HCT116 (cell line): ENCODE measurements at regions of chr17 and their contacts with region 1.

Region 1: GRCh38 chr17:75393523-75394331 is 11.8 kb downstream of the GRB2 start:
- DNase-seq: peak; percentile 95
- ATAC-seq: peak; percentile 99
- H3K4me3 ChIP-seq: peak overlapping the region; percentile 50 to 75
- H3K27ac ChIP-seq: peak overlapping the region; percentile 60
- H3K4me1 ChIP-seq: peaks cover 23 to 30% of the 10 kb centered on the region in 2 experiments
- H3K27me3 ChIP-seq: no peaks in the 10 kb centered on the region
- CTCF ChIP-seq: no peak; a peak in 1 of 6 replicates
- POLR2A ChIP-seq: peak; percentile 52
- RAD21 ChIP-seq: no peak

Region 2: GRCh38 chr17:74646231-74646630 is 747.5 kb before region 1 on chr17:
- CTCF ChIA-PET with region 1: no interaction called
- POLR2A ChIA-PET with region 1: no interaction called
- RAD21 ChIA-PET with region 1: no interaction called
- intact Hi-C with region 1: no loop called
- DNase-seq: peak; percentile 54
- ATAC-seq: peak; percentile 86
- H3K4me3 ChIP-seq: no peak overlapping the region
- H3K27ac ChIP-seq: no peak overlapping the region
- H3K4me1 ChIP-seq: no peaks in the 10 kb centered on the region
- H3K27me3 ChIP-seq: peaks cover 79% of the 10 kb centered on the region
- CTCF ChIP-seq: peak; percentile 65 to 75 (median 66); a peak in 5 of 6 replicates
- POLR2A ChIP-seq: no peak
- RAD21 ChIP-seq: peak; percentile 71

Region 3: GRCh38 chr17:75380315-75380714 is 13.4 kb before region 1 on chr17:
- CTCF ChIA-PET with region 1: interaction called, 3 read pairs
- POLR2A ChIA-PET with region 1: interaction called, 27 read pairs
- RAD21 ChIA-PET with region 1: no interaction called
- intact Hi-C with region 1: no loop called
- DNase-seq: no peak
- ATAC-seq: no peak
- H3K4me3 ChIP-seq: no peak overlapping the region
- H3K27ac ChIP-seq: no peak overlapping the region
- H3K4me1 ChIP-seq: peaks cover 2 to 3% of the 10 kb centered on the region in 2 experiments; a peak in 2 of 4 replicates
- H3K27me3 ChIP-seq: no peaks in the 10 kb centered on the region
- CTCF ChIP-seq: no peak
- POLR2A ChIP-seq: no peak
- RAD21 ChIP-seq: no peak

Region 4: GRCh38 chr17:75405365-75406221 is 11.9 kb after region 1 on chr17 and contains the start of gene GRB2:
- CTCF ChIA-PET with region 1: interaction called, 10 read pairs
- POLR2A ChIA-PET with region 1: interaction called, 19 read pairs
- RAD21 ChIA-PET with region 1: interaction called in 1 of 2 experiments, 3 read pairs
- intact Hi-C with region 1: no loop called
- DNase-seq: peak; percentile 94
- ATAC-seq: peak; percentile 92
- H3K4me3 ChIP-seq: peak within 1 kb of the TSS; percentile 97
- H3K27ac ChIP-seq: peak within 1 kb of the TSS; percentile 87
- H3K4me1 ChIP-seq: peaks cover 5 to 19% of the 10 kb centered on the region in 2 experiments
- H3K27me3 ChIP-seq: no peaks in the 10 kb centered on the region
- CTCF ChIP-seq: no peak
- POLR2A ChIP-seq: peak; percentile 68
- RAD21 ChIP-seq: no peak
- total RNA-seq, gene GRB2: 146 TPM

Region 5: DNA sequence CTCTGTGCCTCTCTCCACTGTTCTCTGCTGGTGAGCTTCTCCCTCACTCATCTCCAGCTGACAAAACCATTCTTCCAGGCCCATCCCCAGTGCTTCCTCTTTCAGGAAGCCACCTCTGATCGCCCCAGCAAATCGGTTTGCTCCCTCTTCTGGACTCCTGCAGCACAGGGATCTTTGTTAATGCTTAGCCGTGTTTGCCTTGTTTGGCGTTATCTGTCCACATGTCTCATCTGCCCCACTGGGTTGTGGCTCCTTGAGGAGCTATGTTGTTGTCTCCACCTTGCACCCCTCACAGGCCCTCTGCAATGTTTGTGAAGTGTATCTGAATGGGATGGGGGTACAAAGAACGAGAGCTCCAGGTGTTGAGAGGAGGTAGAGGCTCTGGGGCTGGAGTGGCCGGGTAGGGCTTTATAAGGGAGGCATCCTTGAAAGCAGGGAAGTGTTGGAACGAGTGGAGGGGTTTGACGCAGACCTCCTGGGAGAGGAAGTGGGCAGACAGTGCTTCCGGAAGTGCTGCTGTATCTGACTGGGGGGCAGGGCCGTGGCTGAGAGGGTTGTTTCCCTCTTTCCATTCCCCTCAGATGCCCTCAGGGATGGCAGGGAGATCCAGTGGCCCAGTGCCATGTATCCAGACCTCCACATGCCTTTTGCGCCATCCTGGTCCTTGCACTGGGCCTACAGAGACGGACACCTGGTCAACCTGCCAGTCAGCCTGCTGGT is 93.8 kb after region 1 on chr17:
- CTCF ChIA-PET with region 1: no interaction called
- POLR2A ChIA-PET with region 1: no interaction called
- RAD21 ChIA-PET with region 1: no interaction called
- intact Hi-C with region 1: no loop called
- DNase-seq: no peak
- ATAC-seq: peak; percentile 16; the same call in 1 of the 2 replicates
- H3K4me3 ChIP-seq: no peak overlapping the region
- H3K27ac ChIP-seq: no peak overlapping the region
- H3K4me1 ChIP-seq: no peaks in the 10 kb centered on the region
- H3K27me3 ChIP-seq: no peaks in the 10 kb centered on the region
- CTCF ChIP-seq: no peak
- POLR2A ChIP-seq: no peak
- RAD21 ChIP-seq: no peak